ENCODE measurements at regions of chr5 and their contacts with region 1.

Region 1: GRCh38 chr5:143582869-143583268 is 179.4 kb upstream of the NR3C1 start:
- DNase-seq: peak in 1 of 4 experiments; percentile 7
- ATAC-seq: no peak
- H3K4me3 ChIP-seq: no peak overlapping the region
- H3K27ac ChIP-seq: no peak overlapping the region
- H3K4me1 ChIP-seq: peaks cover 0 to 33% of the 10 kb centered on the region in 2 experiments; a peak in 4 of 5 replicates
- H3K27me3 ChIP-seq: no peaks in the 10 kb centered on the region
- CTCF ChIP-seq: no peak
- EP300 ChIP-seq: no peak
- POLR2A ChIP-seq: no peak
- RAD21 ChIP-seq: no peak

Region 2: GRCh38 chr5:143142596-143143435 is 440.1 kb before region 1 on chr5:
- CTCF ChIA-PET with region 1: no interaction called
- POLR2A ChIA-PET with region 1: no interaction called
- in situ Hi-C with region 1: no loop called
- intact Hi-C with region 1: no loop called
- DNase-seq: no peak
- ATAC-seq: no peak
- H3K4me3 ChIP-seq: no peak overlapping the region
- H3K27ac ChIP-seq: no peak overlapping the region
- H3K4me1 ChIP-seq: peaks cover 0 to 14% of the 10 kb centered on the region in 2 experiments; a peak in 3 of 5 replicates
- H3K27me3 ChIP-seq: no peaks in the 10 kb centered on the region; a peak in 1 of 5 replicates
- CTCF ChIP-seq: no peak
- EP300 ChIP-seq: no peak
- POLR2A ChIP-seq: no peak
- RAD21 ChIP-seq: no peak

Region 3: DNA sequence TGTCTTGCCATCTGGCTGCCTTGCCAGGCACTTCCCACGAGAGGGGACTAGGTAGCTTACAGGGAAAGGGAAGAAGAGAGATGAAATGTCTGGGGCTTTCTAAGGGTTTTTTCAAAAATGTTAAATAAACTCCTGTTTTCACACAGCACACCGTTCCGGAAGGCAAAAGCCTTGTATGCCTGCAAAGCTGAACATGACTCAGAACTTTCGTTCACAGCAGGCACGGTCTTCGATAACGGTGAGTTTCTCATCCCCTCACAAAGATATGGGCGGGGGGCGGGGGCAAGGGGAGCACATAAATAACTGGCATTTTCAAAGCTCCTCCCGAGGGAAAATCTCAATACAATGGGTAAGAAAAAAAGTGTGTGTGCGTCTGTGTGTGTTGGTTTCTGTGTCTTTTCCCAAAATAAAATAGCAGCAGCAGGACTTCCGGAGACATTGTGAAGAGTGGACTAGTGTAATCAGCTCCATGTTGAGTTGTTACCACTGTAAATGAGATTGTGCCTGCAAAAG is 369.0 kb before region 1 on chr5:
- CTCF ChIA-PET with region 1: no interaction called
- POLR2A ChIA-PET with region 1: no interaction called
- in situ Hi-C with region 1: no loop called
- intact Hi-C with region 1: loop called (anchors 10 kb)
- DNase-seq: peak; percentile 45 to 76 (median 58)
- ATAC-seq: peak; percentile 59
- H3K4me3 ChIP-seq: no peak overlapping the region
- H3K27ac ChIP-seq: peak overlapping the region; percentile 79
- H3K4me1 ChIP-seq: peaks cover 33 to 58% of the 10 kb centered on the region in 2 experiments
- H3K27me3 ChIP-seq: no peaks in the 10 kb centered on the region
- CTCF ChIP-seq: no peak; a peak in 1 of 6 replicates
- EP300 ChIP-seq: peak; percentile 33; the same call in 1 of the 2 replicates
- POLR2A ChIP-seq: 0 out of 2 replicates have a peak, but pooled peaks have one; percentile 28
- RAD21 ChIP-seq: peak in 1 of 2 experiments; percentile 8; a peak in 1 of 4 replicates

Region 4: DNA sequence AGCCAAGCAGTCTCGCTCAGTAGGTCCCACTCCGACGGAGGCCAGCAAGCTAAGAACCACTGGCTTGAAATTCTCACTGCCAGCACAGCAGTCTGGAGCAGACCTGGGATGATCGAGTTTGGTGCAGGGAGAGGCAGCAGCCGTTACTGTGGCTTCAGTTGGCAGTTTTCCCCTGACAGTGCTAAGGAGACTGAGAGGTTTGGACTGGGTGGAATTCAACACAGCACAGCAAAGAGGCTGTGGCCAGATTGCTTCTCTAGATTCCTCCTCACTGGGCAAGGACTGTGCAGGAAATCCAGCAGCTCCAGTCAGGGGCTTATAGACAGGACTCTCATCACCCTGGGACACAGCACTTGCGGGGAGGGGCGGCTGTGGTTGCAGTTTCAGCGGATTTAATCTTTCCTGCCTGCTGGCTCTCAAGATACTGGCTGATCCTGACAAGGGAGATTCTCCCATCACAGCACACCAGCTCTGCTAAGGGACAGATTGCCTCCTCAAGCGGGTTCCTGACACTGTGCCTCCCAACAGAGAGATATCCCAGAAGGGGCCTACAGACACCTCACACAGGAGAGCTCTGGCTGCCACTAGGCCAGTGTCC is 465.5 kb after region 1 on chr5:
- CTCF ChIA-PET with region 1: no interaction called
- POLR2A ChIA-PET with region 1: no interaction called
- in situ Hi-C with region 1: no loop called
- intact Hi-C with region 1: no loop called
- DNase-seq: no peak
- ATAC-seq: no peak
- H3K4me3 ChIP-seq: no peak overlapping the region
- H3K27ac ChIP-seq: no peak overlapping the region
- H3K4me1 ChIP-seq: no peaks in the 10 kb centered on the region
- H3K27me3 ChIP-seq: no peaks in the 10 kb centered on the region
- CTCF ChIP-seq: no peak
- EP300 ChIP-seq: no peak
- POLR2A ChIP-seq: no peak
- RAD21 ChIP-seq: no peak